ENCODE measurements at regions of chr7 and their contacts with region 1.

Region 1: GRCh38 chr7:964401-965231 is 10.1 kb upstream of the ADAP1 start:
- DNase-seq: peak; percentile 91

Region 2: DNA sequence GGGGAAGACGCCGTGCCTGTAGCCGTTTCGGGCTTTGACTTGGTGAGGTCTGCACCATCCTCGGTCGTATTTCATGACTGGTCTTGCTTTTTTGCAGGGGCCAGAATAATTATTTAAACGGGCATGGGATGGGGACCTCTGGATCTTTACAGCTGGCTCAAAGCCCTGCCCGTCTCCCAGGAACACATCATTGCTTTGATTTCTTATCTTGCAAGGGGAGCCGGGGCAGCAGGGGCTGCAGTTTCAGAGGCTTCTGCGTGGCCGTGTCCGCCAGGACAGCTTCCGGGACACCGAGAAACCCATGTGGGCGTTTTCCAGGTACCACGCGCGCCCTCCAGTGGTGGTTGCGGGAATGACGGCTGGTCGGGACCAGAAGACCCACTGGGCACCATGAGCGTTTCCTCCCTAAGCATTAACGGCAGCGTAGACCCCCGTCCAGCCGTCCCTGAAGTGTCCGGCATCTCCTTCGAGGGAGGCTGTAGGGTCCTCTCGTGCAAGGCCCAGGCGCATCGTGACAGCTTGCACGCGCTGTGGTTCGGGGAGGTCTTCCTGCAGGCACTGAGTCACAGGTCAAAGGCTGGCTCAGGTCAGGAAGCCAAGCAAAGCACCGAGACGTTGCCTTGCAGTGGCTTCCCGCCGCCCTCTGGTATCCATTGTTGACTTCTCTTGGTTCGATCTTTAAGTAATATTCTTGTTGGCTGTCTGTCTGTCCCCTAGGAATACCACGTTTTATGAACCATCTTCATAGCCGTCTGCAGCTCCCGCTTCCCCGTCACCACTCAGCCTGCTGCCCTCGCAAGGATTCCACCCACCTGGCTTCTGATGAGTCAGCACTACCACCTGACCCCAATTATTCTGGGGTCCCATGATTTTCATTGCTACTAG is 211.6 kb after region 1 on chr7:
- in situ Hi-C with region 1: loop called (anchors 10 kb)
- DNase-seq: peak; percentile 80